ENCODE measurements at regions of chr11 and their contacts with region 1.

Region 1: DNA sequence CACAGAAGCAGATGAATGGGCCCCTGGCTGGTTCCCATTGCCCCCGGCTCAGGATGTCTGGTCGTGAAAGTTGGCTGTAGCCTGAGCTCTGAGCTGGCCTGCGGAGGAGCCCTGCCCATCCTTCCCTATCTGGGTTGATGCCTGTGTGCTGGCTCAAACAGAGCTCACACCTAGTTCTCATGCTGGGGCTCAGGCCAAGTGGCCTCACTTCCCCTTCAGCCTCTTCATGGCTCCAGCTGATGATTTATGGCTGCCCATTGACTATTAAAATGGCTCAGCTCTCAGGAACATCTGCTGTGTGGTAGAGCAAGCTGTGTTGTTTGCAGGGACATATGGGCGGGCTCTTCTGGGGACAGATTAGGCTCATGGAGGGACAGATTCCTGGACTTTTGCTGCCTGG is 64.7 kb downstream of the ADAMTS15 start:
- DNase-seq: peak; percentile 72
- H3K4me3 ChIP-seq: no peak overlapping the region
- H3K27ac ChIP-seq: no peak overlapping the region
- H3K4me1 ChIP-seq: no peaks in the 10 kb centered on the region
- H3K27me3 ChIP-seq: no peaks in the 10 kb centered on the region
- CTCF ChIP-seq: no peak
- POLR2A ChIP-seq: no peak

Region 2: GRCh38 chr11:130434521-130435223 is 78.5 kb before region 1 on chr11:
- intact Hi-C with region 1: loop called (anchors 5 kb)
- DNase-seq: peak; percentile 75
- H3K4me3 ChIP-seq: peak overlapping the region; percentile 33 to 40
- H3K27ac ChIP-seq: peak overlapping the region; percentile 68 to 70
- H3K4me1 ChIP-seq: no peaks in the 10 kb centered on the region
- H3K27me3 ChIP-seq: no peaks in the 10 kb centered on the region
- CTCF ChIP-seq: peak; percentile 36 to 93 (median 74)
- POLR2A ChIP-seq: no peak

Region 3: GRCh38 chr11:130609121-130610035 is 96.2 kb after region 1 on chr11:
- intact Hi-C with region 1: loop called (anchors 5 kb)
- DNase-seq: no peak
- H3K4me3 ChIP-seq: no peak overlapping the region
- H3K27ac ChIP-seq: peak overlapping the region; percentile 13 to 56
- H3K4me1 ChIP-seq: no peaks in the 10 kb centered on the region
- H3K27me3 ChIP-seq: no peaks in the 10 kb centered on the region
- CTCF ChIP-seq: no peak
- POLR2A ChIP-seq: no peak

Region 4: DNA sequence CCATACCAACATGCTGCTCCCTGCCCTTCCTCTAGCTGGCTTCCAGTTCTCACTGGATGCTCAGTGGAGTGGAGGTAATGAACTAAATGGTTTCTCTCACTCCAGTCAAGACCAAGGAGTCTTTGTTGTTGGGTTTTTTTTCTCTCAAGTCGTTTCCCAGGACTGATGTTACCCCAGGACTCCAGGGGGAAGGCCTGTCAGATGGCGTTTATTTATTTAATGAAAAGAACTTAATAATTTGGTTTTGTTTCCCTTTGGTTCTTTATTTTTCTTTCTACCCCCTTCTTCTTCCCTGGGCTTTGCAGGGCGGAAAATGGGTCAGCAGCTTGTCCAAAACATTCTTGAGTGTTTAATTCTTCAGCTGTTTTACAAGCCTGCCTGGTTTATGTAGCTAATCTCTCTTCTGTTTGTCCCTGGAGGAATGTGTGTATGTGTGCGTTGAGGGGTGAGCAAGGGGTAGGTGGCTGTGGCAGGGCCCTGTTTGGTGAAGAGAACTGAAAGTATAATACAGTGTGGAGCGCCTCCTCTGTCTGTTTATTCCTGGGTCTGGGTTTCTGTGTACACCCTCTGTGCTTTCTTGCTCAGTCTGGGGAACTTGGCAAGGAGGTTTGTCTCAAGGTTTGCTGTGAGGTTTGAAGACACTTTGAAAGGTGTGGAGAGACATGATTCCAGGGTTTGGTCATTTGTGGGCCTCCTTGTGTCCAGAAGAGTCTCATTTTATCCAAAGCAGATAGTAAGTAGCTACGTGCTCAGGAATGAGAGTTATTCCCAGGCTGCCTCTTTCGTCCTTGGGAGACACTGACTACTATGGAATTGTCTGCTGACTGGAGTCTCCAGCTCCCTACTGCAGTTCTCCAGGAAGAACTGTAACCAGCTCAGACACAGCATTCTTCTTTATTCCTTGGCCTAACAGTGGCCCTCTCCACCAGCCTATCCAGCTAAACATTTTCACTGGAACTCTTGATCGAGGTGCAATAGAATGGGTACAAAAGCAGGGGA is 110.8 kb after region 1 on chr11:
- intact Hi-C with region 1: no loop called
- DNase-seq: no peak
- H3K4me3 ChIP-seq: no peak overlapping the region
- H3K27ac ChIP-seq: no peak overlapping the region
- H3K4me1 ChIP-seq: no peaks in the 10 kb centered on the region
- H3K27me3 ChIP-seq: no peaks in the 10 kb centered on the region
- CTCF ChIP-seq: peak in 1 of 4 experiments; percentile 17
- POLR2A ChIP-seq: no peak